RWPE1 (cell line): ENCODE measurements at regions of chr10 and their contacts with region 1.

Region 1: DNA sequence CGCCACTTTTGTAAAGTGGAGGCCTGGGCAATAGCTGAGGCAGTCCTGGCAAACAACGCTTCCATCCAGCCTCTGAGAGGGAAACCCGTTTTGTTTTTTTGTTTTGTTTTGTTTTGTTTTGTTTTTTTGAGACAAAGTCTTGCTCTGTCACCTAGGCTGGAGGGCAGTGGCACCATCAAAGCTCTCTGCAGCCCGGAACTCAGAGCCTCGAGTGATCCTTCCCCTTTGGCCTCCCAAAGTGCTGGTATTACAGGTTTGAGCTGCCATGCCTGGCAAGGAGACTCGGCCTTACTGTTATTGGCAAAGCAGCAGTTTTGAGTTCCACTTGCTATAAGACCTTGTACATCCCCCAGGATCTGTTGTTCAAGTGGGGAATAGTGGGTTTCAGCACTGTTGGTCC is 10.5 kb upstream of the SLC25A16 start:
- DNase-seq: no peak
- H3K27ac ChIP-seq: no peak overlapping the region
- CTCF ChIP-seq: no peak

Region 2: GRCh38 chr10:68526626-68527307 is 11.0 kb before region 1 on chr10:
- CTCF ChIA-PET with region 1: no interaction called
- POLR2A ChIA-PET with region 1: interaction called, 10 read pairs
- DNase-seq: no peak
- H3K27ac ChIP-seq: peak overlapping the region; percentile 83
- CTCF ChIP-seq: no peak

Region 3: GRCh38 chr10:68697106-68697505 is 159.3 kb after region 1 on chr10:
- CTCF ChIA-PET with region 1: no interaction called
- POLR2A ChIA-PET with region 1: no interaction called
- DNase-seq: no peak
- H3K27ac ChIP-seq: no peak overlapping the region
- CTCF ChIP-seq: no peak

Region 4: DNA sequence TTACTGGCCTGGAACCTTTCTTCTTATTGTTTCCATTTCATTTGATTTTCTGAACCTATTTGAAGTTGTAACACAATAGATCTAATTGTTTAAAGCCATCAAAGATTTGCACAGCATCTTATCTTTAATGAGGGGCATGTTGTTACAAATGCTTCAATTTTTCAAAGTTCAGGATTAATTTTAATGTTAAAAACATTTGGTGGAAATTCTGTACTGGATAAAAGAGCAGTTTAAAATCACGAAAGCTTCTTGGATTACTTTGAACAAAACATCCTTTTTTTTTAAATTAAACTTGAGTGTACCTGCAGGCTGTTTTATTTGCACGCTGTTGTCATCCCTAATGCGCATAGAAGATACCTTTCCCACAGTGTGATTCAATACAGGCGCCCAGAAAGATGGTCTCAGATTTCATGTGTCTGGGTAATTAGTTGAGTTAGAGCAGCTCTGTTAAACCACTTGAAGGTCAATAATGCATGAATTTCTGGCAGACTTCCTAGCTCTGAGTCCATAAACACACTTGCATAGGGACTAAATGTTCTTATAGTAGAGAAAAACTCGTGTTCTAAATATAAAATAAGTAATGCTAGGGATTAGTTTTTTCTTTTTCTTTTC is 334.0 kb after region 1 on chr10:
- CTCF ChIA-PET with region 1: no interaction called
- POLR2A ChIA-PET with region 1: no interaction called
- DNase-seq: no peak
- H3K27ac ChIP-seq: no peak overlapping the region
- CTCF ChIP-seq: no peak